Psoas muscle (tissue), 8 donors: ENCODE measurements at regions of chr2 and their contacts with region 1.

Region 1: GRCh38 chr2:72137498-72138010 is 10.1 kb downstream of the CYP26B1 start:
- DNase-seq: peak; percentile 65 to 79
- ATAC-seq: peak; percentile 73 to 91 (median 80)
- H3K4me3 ChIP-seq: no peak overlapping the region
- H3K27ac ChIP-seq: no peak overlapping the region
- H3K4me1 ChIP-seq: peaks cover 11% of the 10 kb centered on the region
- H3K27me3 ChIP-seq: no peaks in the 10 kb centered on the region
- CTCF ChIP-seq: peak; percentile 82

Region 2: DNA sequence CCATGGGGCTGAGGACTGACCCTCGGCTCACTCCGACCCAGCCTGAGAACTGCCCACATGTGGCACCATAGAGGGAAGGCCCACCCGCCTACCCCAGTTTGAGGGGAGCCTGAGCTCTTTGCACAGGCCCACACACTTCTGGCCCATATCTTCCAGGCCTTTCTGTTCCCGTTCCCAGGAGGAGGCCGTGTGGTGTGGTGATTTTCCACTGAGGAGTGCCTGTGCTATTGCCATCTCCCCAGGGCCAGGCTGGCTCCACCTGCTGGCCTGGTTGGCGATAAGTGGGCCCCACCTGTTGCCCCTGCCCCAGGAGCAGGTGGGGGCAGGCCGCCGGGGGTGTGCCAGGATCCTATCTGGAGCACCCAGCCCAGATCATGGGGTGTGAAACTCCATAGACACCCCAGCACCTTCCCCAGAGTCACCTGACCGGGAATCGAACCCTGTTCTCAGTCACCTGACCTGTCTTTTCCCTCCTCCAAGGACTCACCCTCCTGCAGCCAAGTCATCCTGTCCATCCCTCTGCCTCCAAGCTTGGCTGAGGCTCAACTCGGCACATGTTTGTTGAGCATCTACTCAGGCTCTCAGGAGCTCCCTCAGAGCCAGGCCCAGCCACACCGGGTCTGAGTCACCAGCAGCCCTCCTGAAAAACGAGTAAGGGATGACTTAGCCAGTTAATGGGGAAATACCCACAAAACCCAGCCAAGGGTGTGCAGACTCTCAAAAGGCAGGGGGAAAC is 110.0 kb before region 1 on chr2:
- intact Hi-C with region 1: loop called in 1 of 2 experiments (anchors 10 kb)
- DNase-seq: no peak
- ATAC-seq: no peak
- H3K4me3 ChIP-seq: no peak overlapping the region
- H3K27ac ChIP-seq: no peak overlapping the region
- H3K4me1 ChIP-seq: no peaks in the 10 kb centered on the region
- H3K27me3 ChIP-seq: no peaks in the 10 kb centered on the region
- CTCF ChIP-seq: no peak

Region 3: DNA sequence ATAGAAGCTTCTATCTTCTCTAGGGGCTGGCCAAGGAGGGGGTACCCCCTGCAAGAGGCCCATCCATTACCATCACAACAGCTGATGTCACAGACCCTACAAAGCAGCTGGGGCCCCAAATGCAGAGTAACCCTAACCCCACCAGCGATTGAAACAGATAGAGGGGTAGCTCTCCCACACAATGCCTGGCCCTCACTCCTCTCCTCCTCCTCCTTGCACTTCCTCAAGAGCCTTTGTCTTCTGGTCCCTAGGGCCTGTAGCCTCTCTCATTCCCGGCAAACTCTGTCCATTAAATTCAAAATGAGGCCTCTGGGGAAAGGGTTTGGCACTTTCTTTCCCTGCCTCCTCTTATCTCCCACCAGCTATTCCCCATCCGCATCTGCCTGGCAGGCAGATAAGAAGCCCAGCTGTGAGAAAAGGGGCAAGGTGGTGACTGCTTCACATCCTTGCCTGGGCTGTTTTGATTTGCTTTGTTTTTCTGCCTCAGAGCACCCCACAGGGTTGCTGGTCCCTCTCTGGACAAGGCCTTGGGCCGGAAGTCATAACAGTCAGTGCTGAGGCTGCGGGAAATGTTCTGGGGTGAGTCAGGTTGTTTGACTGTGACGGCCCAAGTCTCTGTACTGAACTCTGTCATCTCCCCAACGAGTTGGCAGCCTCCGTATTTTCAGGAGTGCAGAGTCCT is 36.2 kb after region 1 on chr2:
- intact Hi-C with region 1: no loop called
- DNase-seq: no peak
- ATAC-seq: no peak
- H3K4me3 ChIP-seq: no peak overlapping the region
- H3K27ac ChIP-seq: no peak overlapping the region
- H3K4me1 ChIP-seq: no peaks in the 10 kb centered on the region
- H3K27me3 ChIP-seq: no peaks in the 10 kb centered on the region
- CTCF ChIP-seq: no peak

Region 4: GRCh38 chr2:72439892-72440291 is 302.3 kb after region 1 on chr2:
- intact Hi-C with region 1: no loop called
- DNase-seq: no peak
- ATAC-seq: no peak
- H3K4me3 ChIP-seq: no peak overlapping the region
- H3K27ac ChIP-seq: no peak overlapping the region
- H3K4me1 ChIP-seq: no peaks in the 10 kb centered on the region
- H3K27me3 ChIP-seq: no peaks in the 10 kb centered on the region
- CTCF ChIP-seq: no peak

Region 5: GRCh38 chr2:72980535-72981217 is 843.1 kb after region 1 on chr2:
- intact Hi-C with region 1: no loop called
- DNase-seq: peak in 1 of 2 donors; percentile 18
- ATAC-seq: no peak
- H3K4me3 ChIP-seq: no peak overlapping the region
- H3K27ac ChIP-seq: no peak overlapping the region
- H3K4me1 ChIP-seq: peaks cover 42% of the 10 kb centered on the region
- H3K27me3 ChIP-seq: no peaks in the 10 kb centered on the region
- CTCF ChIP-seq: no peak